ENCODE measurements at regions of chr16 and their contacts with region 1.

Region 1: GRCh38 chr16:75198135-75198600 is 8.8 kb downstream of the CTRB2 start:
- DNase-seq: no peak
- ATAC-seq: peak in 1 of 2 donors; percentile 47

Region 2: DNA sequence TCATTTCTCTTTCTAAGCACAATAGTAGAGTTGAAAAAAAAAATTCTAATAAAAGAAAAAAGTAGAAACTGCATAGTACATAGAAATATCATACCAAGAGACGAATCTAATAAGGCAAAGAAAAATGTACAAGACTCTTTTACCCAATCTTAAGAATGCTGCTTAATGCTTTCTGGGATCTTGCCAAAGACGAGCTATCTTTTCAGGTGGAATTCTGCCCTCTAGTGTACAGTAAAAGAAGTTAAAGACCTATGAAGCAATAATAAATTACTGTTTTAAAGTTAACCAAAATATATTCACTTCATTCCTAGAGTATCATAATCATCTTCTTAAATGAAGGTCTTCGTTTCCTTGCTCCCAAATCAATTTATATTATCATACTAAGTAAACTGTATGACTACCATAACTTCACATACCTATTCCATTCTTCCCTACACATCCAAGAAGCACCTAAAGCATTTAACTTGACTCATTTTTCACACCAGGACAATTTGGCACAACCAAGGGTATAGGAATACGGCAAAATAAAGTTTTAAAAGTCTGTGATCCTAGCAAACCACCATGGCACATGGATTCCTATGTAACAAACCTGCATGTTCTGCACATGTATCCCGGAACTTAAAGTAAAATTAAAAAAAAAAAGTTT is 187.5 kb after region 1 on chr16:
- intact Hi-C with region 1: loop called in 1 of 2 experiments (anchors 5 kb)
- DNase-seq: no peak
- ATAC-seq: peak in 1 of 2 donors; percentile 46

Region 3: DNA sequence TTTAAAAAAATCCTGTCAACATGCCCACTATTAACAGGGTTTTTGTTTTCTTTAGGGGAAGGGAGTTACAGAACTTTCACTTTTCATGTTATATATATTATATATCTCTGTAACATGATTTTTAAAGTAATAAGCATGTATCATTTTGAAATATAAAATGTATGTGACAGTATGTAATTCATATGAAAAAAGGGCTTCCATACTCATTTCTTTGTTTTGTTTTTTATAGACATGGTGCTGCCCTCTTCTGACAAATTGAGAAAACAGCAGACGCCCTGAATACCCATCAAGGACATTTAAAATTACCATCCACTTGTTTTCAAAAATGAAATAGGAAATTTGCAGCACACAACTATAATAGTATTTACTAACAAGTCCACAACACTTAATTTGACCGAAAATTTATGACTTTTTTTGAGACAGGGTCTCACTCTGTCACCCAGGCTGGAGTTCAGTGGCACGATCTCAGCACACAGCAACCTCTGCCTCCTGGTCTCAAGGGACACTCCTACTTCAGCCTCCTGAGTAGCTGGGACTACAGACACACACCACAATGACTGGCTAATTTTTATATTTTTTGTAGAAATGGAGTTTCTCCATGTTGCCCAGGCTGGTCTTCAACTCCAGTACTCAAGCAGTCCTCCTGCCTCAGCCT is 204.8 kb after region 1 on chr16:
- intact Hi-C with region 1: loop called (anchors 1 to 10 kb)
- DNase-seq: no peak
- ATAC-seq: peak; percentile 45 to 54

Measured in left cardiac atrium (tissue), 4 donors.